ENCODE measurements at regions of chr5 and their contacts with region 1.

Region 1: GRCh38 chr5:136174021-136174659 is 18.8 kb downstream of the SMIM32 start:
- DNase-seq: no peak
- H3K4me3 ChIP-seq: no peak overlapping the region
- H3K27ac ChIP-seq: no peak overlapping the region
- H3K4me1 ChIP-seq: no peaks in the 10 kb centered on the region
- H3K27me3 ChIP-seq: no peaks in the 10 kb centered on the region
- CTCF ChIP-seq: peak; percentile 57

Region 2: DNA sequence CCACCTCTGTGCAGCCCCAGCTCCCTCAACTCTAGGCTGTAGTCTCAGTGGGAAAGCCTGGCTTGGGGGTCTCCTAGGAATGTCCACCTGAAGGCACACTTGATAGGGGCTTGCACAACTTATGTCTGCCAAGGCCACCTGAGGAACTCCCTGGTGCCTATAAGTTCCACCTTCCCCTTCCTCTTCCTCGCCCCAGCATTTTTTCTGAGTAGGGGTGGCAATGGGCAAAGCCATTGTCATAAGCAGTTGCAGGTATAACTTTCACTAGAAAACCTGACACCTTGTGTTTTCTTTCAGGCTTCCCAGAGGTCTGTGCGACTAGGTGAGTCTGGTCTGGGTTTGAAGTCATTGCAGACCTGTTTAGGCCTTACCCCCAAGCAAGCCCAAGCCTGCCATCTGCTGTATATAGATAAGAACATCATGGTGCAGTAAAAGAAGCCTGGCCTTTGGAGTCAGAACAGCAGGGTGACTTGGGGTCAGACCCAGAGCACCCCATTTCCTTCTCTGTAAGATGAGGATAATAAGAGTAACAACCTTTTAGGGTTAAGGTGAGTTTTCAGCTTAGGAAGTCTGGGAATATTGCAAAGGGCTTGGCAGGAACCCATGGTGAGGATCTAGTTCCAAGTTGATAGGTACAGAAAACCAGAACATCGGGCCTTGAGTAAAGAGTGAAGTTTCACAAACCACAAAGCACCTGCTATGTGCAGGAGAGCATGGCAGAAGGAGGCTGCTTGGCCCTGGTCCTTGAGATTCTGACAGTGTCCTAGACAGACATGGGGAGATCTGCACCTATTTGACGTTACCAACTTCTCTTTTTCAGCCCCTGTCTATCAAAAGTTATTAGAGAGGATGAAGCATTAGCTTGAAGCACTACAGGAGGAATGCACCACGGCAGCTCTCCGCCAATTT is 111.5 kb before region 1 on chr5:
- intact Hi-C with region 1: loop called (anchors 5 kb)
- DNase-seq: no peak
- H3K4me3 ChIP-seq: no peak overlapping the region
- H3K27ac ChIP-seq: no peak overlapping the region
- H3K4me1 ChIP-seq: no peaks in the 10 kb centered on the region
- H3K27me3 ChIP-seq: no peaks in the 10 kb centered on the region
- CTCF ChIP-seq: peak; percentile 47

Region 3: DNA sequence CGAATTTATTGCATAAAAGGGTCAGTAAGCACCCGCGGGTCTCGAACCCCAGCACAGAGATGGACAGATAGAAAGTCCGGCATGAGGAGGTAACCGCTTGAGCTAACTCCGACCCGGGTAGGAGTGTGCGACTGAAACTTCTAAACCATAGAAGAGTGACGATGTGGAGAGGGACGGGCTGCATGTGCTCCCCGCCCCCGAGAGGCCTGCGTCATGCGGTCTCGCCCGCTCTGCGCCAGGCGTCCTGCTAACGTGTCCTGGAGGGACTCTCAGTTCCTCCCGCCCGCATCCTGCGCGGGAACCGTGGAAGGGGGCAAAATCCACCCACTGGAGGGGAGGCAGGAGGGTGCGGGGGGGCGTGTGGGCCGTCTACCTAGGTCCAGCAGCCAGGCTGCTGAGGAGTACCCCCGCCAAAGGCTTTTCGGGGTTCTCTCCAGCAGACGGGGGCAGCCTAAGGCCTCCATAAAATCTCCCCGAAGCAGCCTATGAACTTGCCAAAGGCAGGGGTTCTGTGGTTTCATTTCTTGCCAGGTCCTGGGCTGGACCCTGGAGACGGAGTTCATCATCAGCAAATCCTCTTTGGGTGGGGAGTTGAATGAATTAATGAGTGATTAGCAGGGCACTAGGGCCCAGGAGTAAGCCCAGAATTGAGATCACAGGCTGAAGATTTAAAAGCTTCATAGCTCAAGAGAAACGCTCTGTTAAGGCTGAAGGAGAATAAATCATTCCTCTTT is 93.5 kb before region 1 on chr5:
- intact Hi-C with region 1: loop called (anchors 5 kb)
- DNase-seq: peak; percentile 98
- H3K4me3 ChIP-seq: peak overlapping the region; percentile 26
- H3K27ac ChIP-seq: peak overlapping the region; percentile 62
- H3K4me1 ChIP-seq: peaks cover 5% of the 10 kb centered on the region
- H3K27me3 ChIP-seq: no peaks in the 10 kb centered on the region
- CTCF ChIP-seq: no peak

Measured in colonic mucosa (tissue), 4 donors.